OCI-LY7 (cell line): ENCODE measurements at regions of chr22 and their contacts with region 1.

Region 1: GRCh38 chr22:46116491-46116958 is 33.8 kb upstream of the PPARA start:
- DNase-seq: peak; percentile 89
- H3K4me3 ChIP-seq: no peak overlapping the region
- H3K27ac ChIP-seq: no peak overlapping the region
- H3K4me1 ChIP-seq: peaks cover 6% of the 10 kb centered on the region
- CTCF ChIP-seq: peak; percentile 98

Region 2: GRCh38 chr22:45994491-45995404 is 121.8 kb before region 1 on chr22:
- CTCF ChIA-PET with region 1: interaction called, 14 read pairs
- POLR2A ChIA-PET with region 1: no interaction called
- intact Hi-C with region 1: loop called (anchors 1 kb)
- DNase-seq: peak; percentile 58
- H3K4me3 ChIP-seq: no peak overlapping the region
- H3K27ac ChIP-seq: no peak overlapping the region
- H3K4me1 ChIP-seq: peaks cover 33% of the 10 kb centered on the region
- CTCF ChIP-seq: peak; percentile 91

Region 3: DNA sequence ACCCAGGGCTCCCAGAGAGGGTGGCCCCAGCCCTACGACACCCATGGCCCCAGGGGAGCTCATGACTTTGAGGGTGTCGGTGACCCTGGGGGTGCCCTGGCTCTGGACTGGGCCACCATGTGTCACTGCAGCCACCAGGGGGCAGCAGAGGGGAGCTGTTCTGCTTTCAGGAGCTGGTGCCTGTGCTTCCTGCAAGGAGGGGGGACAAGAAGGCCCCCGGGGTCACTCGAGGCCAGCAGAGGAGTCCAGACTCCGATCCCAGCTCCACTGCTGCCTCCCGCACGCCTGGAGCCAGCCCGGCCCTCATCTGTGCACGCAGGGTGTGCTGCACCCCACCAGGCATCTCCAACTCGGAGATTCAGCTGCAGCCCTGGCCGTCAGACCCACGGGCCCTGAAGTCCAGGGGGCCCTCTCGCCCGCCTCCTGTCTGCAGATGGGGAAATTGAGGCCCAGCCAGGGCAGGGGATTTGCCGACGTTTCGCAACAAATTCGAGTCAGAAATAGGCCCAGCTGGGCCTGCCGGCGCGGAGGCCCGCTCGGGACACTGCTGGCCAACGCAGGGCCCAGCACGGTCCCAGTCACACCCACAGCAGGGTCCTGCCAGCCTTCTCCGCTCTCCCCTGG is 110.0 kb before region 1 on chr22:
- CTCF ChIA-PET with region 1: interaction called, 16 read pairs
- POLR2A ChIA-PET with region 1: no interaction called
- intact Hi-C with region 1: loop called (anchors 1 kb)
- DNase-seq: peak; percentile 83
- H3K4me3 ChIP-seq: no peak overlapping the region
- H3K27ac ChIP-seq: no peak overlapping the region
- H3K4me1 ChIP-seq: peaks cover 13% of the 10 kb centered on the region
- CTCF ChIP-seq: peak; percentile 94

Region 4: DNA sequence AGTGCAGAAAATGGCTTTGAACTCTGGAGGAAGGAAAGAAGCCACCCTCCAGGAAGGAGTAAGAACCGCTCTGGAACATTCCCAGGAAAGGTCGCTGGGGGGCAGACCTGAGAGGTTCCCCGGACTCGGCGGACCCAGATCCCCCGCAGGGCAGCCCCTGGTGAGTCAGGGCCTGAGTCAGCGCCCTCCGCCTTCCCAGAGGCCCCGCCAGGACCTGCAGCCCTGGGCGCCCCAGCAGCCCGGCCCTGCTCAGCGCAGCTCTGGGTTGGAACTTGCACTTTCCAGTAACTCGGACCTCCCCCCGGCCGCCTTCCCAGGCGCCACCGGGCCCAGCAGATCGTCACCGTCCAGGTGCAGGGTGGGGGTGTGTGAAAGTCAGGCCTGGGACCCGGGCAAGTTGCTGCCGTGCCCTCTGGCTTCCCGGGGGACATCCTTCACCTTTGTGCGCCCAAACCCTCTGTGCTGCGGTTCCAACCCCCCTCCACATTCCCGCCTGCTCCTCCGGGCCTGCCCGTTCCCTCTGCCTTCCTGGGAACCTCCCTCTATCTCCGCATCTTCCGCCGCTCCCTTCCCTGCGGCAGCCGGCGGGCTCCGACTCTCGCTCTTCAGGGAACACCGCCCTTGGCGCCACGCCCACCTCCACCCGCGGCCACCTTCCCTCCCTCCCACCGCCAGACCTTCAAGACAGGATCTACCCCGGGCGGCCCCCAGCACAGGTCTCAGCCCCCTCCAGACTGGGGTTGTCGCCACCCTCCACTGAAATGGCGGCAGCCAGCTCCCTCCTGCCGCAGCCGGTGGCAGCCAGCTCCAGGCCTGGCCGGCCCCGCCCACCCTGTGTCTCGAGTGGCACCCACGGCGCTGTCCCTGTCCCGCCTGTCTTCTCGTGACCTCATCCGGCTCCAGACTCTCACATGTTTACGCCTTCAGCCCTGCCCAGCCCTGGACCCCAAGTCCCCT is 102.8 kb before region 1 on chr22:
- CTCF ChIA-PET with region 1: interaction called, 5 read pairs
- POLR2A ChIA-PET with region 1: no interaction called
- intact Hi-C with region 1: loop called (anchors 1 kb)
- DNase-seq: peak; percentile 85
- H3K4me3 ChIP-seq: peak overlapping the region; percentile 68
- H3K27ac ChIP-seq: no peak overlapping the region
- H3K4me1 ChIP-seq: peaks cover 14% of the 10 kb centered on the region
- CTCF ChIP-seq: peak; percentile 84